ENCODE measurements at regions of chr12 and their contacts with region 1.

Region 1: GRCh38 chr12:53427905-53428594 is 4.4 kb downstream of the AMHR2 start:
- DNase-seq: peak; percentile 96

Region 2: DNA sequence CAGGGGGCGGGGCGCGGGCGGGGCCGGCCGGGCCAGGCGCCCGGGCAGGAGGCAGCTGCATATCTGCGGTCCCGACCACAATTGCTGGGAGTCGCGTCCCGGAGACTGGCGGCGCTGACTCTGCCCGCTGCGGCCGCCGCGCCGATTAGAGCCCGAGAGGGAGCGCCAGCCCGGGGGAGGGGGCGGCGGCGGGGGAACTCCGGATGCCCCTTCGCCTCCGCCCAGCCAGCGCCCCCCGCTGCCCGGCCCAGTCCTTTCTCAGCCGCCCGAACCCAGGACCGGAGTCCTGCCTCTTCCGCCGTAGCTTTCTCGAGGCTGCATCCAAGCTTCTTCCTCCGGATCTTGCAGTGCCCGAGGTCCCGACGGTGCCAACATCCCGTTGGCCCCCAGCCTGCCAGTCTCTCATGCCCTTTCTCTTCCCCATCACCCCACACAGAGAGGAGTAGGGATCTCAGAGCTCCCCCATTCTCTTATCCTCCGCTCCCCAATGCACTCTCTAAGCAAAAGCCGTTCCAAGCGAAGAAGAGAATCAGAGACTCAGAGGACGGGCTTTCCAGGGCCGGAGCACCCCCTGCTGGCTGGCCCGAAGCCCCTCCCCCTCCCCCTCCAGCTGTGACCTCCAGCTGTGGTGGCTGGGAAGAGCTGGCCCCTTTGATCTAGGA is 83.1 kb before region 1 on chr12:
- in situ Hi-C with region 1: loop called (anchors 10 kb)
- DNase-seq: peak; percentile 74

Region 3: GRCh38 chr12:53492830-53493611 is 65.0 kb after region 1 on chr12:
- in situ Hi-C with region 1: no loop called
- DNase-seq: peak; percentile 90

Measured in Caki2 (cell line).